PC-3 (cell line): ENCODE measurements at regions of chr1 and their contacts with region 1.

Region 1: GRCh38 chr1:117842240-117843170 is 86.9 kb downstream of the GDAP2 start:
- DNase-seq: peak; percentile 84
- ATAC-seq: peak; percentile 63
- H3K4me3 ChIP-seq: no peak overlapping the region
- H3K27ac ChIP-seq: peak overlapping the region; percentile 51
- H3K4me1 ChIP-seq: peaks cover 40% of the 10 kb centered on the region
- H3K27me3 ChIP-seq: no peaks in the 10 kb centered on the region
- CTCF ChIP-seq: peak; percentile 53

Region 2: DNA sequence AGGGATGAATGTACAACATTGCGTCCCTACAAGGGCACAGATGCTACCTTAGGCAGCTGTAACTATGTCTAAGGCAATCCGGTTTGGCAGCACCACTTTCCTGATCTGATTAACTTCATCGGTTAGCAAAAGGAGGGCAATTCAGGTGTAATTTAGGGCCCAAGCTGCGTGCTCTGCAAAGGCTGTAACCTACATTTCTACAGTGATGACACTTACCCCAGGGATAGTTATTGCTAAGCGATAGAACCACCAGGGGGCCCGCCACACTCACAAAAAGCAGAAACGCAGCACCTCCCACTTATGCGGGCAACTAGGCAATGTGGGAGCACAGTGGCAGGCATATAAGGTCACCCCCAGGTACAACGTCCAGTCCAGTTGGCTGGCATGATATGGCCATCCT is 26.6 kb before region 1 on chr1:
- CTCF ChIA-PET with region 1: no interaction called
- POLR2A ChIA-PET with region 1: no interaction called
- intact Hi-C with region 1: no loop called
- DNase-seq: peak; percentile 32
- ATAC-seq: no peak
- H3K4me3 ChIP-seq: no peak overlapping the region
- H3K27ac ChIP-seq: peak overlapping the region; percentile 20
- H3K4me1 ChIP-seq: peaks cover 24% of the 10 kb centered on the region
- H3K27me3 ChIP-seq: no peaks in the 10 kb centered on the region
- CTCF ChIP-seq: peak; percentile 52

Region 3: DNA sequence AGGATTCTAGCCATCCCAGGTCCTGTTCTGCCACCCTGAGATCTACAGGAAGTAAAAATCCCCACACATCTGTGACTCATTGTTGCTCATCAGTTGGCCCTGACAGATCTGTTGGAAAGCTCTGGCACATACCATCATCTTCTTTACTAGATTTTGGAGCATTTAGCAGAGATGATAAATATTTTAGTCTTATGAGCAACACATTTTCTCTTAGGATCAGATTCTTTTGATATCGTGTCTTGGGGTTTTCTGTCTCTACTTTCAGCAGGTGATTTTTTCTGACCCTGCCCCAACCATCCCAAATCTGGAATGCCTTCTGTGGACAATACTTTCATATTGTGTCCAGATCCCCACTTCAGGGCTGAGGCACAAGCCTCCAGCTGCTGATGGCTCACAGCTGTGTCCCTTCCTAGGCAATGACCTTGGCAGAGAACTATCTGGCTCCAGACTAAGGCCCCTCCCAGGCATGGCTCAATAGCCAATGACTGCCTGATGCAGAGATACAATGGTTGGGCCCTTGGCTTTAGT is 15.9 kb before region 1 on chr1:
- CTCF ChIA-PET with region 1: no interaction called
- POLR2A ChIA-PET with region 1: no interaction called
- intact Hi-C with region 1: loop called (anchors 2 kb)
- DNase-seq: peak; percentile 97
- ATAC-seq: peak; percentile 81
- H3K4me3 ChIP-seq: peak overlapping the region; percentile 24; the same call in 1 of the 2 replicates
- H3K27ac ChIP-seq: peak overlapping the region; percentile 85
- H3K4me1 ChIP-seq: peaks cover 47% of the 10 kb centered on the region
- H3K27me3 ChIP-seq: no peaks in the 10 kb centered on the region
- CTCF ChIP-seq: no peak

Region 4: GRCh38 chr1:117857434-117857833 is 14.9 kb after region 1 on chr1:
- CTCF ChIA-PET with region 1: no interaction called
- POLR2A ChIA-PET with region 1: interaction called, 16 read pairs
- intact Hi-C with region 1: loop called (anchors 1 kb)
- DNase-seq: peak; percentile 65
- ATAC-seq: peak; percentile 86
- H3K4me3 ChIP-seq: no peak overlapping the region
- H3K27ac ChIP-seq: no peak overlapping the region
- H3K4me1 ChIP-seq: peaks cover 14% of the 10 kb centered on the region
- H3K27me3 ChIP-seq: no peaks in the 10 kb centered on the region
- CTCF ChIP-seq: no peak

Region 5: DNA sequence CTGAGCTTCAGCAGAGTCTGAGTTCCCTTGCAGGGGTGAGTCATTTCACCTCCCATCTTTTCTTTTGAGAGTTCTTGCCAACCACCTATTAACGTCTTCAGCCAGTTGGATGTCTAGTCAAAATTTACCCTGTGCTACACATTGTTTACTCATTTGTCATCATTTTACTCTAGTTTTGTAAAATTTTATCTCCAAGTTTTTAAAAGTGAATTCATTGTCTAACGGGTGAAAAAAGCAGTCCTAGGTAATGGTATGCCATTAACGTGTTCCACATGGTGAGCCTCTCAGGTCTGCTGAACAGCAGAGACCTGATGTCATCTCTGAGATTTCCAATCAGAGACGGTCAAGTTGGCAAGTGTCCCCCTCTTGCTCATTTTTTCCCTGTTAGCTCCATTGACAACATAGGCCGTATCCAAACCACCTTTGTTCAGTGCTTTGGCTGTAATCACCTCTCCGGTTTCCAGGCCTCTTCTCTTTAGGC is 1060.2 kb after region 1 on chr1:
- CTCF ChIA-PET with region 1: no interaction called
- POLR2A ChIA-PET with region 1: no interaction called
- intact Hi-C with region 1: no loop called
- DNase-seq: peak; percentile 43
- ATAC-seq: no peak; the same call in 1 of the 2 replicates
- H3K4me3 ChIP-seq: no peak overlapping the region
- H3K27ac ChIP-seq: 0 out of 2 replicates have a peak overlapping the region, but pooled peaks have one; percentile 20
- H3K4me1 ChIP-seq: peaks cover 11% of the 10 kb centered on the region
- H3K27me3 ChIP-seq: no peaks in the 10 kb centered on the region
- CTCF ChIP-seq: no peak